ENCODE measurements at regions of chr3 and their contacts with region 1.

Region 1: GRCh38 chr3:48439820-48440589 is at the starts of genes CCDC51 and TMA7:
- DNase-seq: peak; percentile 99
- ATAC-seq: peak; percentile 95
- H3K4me3 Mint-ChIP-seq: peak within 1 kb of the TSS; percentile 99
- H3K27ac Mint-ChIP-seq: peak within 1 kb of the TSS; percentile 99
- H3K4me1 Mint-ChIP-seq: peaks cover 17% of the 10 kb centered on the region
- H3K27me3 Mint-ChIP-seq: no peaks in the 10 kb centered on the region
- CTCF ChIP-seq: no peak
- total RNA-seq, gene CCDC51: 23.9 to 25.1 TPM (median 24.7 TPM) in 3 replicates
- total RNA-seq, gene TMA7: 281 to 318 TPM (median 285 TPM) in 3 replicates

Region 2: GRCh38 chr3:48247401-48247811 is 192.6 kb before region 1 on chr3:
- CTCF ChIA-PET with region 1: interaction called, 18 read pairs
- POLR2A ChIA-PET with region 1: interaction called, 3 read pairs
- DNase-seq: no peak
- ATAC-seq: no peak; the same call in none of the 2 replicates
- H3K4me3 Mint-ChIP-seq: no peak overlapping the region
- H3K27ac Mint-ChIP-seq: peak overlapping the region; percentile 78
- H3K4me1 Mint-ChIP-seq: peaks cover 29% of the 10 kb centered on the region
- H3K27me3 Mint-ChIP-seq: no peaks in the 10 kb centered on the region
- CTCF ChIP-seq: no peak

Region 3: GRCh38 chr3:48347500-48347899 is 92.5 kb before region 1 on chr3:
- CTCF ChIA-PET with region 1: interaction called, 11 read pairs
- POLR2A ChIA-PET with region 1: no interaction called
- DNase-seq: no peak
- ATAC-seq: no peak
- H3K4me3 Mint-ChIP-seq: no peak overlapping the region
- H3K27ac Mint-ChIP-seq: no peak overlapping the region
- H3K4me1 Mint-ChIP-seq: no peaks in the 10 kb centered on the region
- H3K27me3 Mint-ChIP-seq: peaks cover 45% of the 10 kb centered on the region
- CTCF ChIP-seq: no peak

Region 4: DNA sequence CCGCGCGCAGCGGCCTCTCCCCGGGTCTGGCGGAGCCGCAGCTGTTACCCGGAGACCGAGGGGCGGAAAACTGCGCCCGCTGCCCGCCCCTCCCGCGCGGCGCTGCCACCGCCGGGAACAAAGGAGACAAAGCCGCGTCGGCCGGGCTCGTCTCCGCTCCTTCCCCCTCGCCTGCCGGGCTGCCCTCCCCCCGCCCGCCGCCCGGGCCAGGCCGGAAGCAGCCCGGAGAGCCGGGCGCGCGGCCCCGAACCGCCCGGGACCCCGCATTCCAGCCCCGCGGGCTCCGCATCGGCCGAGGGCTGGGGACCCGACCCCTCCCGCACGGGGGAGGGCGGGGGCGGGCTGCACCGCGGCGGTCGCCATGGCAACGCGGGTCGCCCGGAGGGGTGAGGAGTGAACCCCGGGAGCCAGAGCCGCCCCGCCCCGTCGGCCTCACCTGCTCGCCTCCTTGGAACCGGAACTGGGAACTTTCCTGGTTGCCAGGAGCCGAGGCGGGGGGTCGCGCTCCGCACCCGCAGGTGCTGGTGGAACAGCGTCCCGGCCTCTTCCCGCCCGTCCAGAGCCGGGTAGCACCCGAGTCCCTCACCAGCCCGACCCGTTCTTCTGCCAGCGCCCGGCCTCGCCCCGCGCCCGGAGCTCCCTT is 10.6 kb before region 1 on chr3:
- CTCF ChIA-PET with region 1: interaction called, 218 read pairs
- POLR2A ChIA-PET with region 1: interaction called, 15 read pairs
- DNase-seq: peak; percentile 86
- ATAC-seq: peak; percentile 16
- H3K4me3 Mint-ChIP-seq: peak overlapping the region; percentile 87
- H3K27ac Mint-ChIP-seq: peak overlapping the region; percentile 87
- H3K4me1 Mint-ChIP-seq: peaks cover 59% of the 10 kb centered on the region
- H3K27me3 Mint-ChIP-seq: no peaks in the 10 kb centered on the region
- CTCF ChIP-seq: no peak

Region 5: DNA sequence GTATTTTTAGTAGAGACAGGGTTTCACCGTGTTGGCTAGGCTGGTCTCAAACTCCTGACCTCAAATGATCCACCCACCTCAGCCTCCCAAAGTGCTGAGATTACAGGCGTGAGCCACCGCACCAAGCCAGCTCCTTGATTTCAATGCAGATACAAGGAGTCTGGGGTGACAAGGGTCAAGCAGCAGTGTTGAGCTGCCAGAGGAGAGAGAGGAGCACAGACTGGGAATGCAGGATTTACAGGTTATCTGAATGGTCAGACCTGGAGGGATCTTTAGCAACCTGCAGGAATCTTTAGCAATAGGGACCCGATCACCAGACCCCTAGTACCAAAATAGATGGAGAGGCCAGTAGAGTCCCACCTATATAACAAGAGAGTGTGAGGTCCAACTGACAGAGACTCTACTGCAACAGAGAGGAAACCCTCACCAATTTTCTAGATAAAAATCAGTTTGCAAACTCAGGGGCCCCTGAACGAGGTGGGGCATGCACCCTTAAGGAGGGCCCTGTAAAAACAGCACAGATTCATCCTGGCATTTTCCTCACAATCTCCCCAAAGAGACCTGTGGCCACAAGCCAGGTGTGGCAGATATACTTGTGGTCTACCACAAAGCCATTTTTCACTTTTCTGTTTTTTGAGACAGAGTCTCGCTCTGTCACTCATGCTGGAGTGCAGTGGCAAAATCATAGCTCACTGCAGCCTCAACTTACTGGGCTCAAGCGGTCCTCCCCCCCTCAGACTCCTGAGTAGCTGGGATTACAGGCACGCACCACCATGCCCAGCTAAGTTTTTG is 74.6 kb after region 1 on chr3:
- CTCF ChIA-PET with region 1: interaction called, 30 read pairs
- POLR2A ChIA-PET with region 1: interaction called, 4 read pairs
- DNase-seq: no peak
- ATAC-seq: no peak
- H3K4me3 Mint-ChIP-seq: no peak overlapping the region
- H3K27ac Mint-ChIP-seq: no peak overlapping the region
- H3K4me1 Mint-ChIP-seq: peaks cover 2% of the 10 kb centered on the region; the same call in 1 of the 2 replicates
- H3K27me3 Mint-ChIP-seq: no peaks in the 10 kb centered on the region
- CTCF ChIP-seq: no peak

Region 6: GRCh38 chr3:48623851-48624547 is 184.0 kb after region 1 on chr3:
- CTCF ChIA-PET with region 1: interaction called, 12 read pairs
- POLR2A ChIA-PET with region 1: no interaction called
- DNase-seq: no peak
- ATAC-seq: no peak
- H3K4me3 Mint-ChIP-seq: no peak overlapping the region
- H3K27ac Mint-ChIP-seq: no peak overlapping the region
- H3K4me1 Mint-ChIP-seq: peaks cover 7% of the 10 kb centered on the region
- H3K27me3 Mint-ChIP-seq: no peaks in the 10 kb centered on the region
- CTCF ChIP-seq: no peak